ENCODE measurements at regions of chr1 and their contacts with region 1.

Region 1: DNA sequence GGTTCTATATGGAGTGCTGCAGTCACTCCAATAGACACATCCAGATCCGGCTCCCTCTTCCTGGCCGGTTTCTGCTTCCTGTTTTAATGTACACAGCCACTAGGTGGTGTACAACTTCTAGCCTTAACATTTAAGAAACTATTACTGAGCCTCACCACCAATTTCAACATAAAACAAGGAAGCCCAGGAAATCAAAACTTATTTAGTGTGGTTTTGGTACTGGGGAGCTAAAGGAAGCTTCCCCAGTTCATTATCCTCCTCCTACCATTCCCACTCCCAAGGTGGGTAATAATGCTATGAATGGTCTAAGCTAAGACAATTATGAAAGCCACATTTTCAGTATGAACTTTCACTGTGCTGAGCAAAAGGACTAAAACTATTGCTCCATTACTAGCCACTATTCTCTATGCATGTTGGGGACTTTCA is 25.5 kb upstream of the MTMR11 start:
- DNase-seq: peak in 1 of 2 donors; percentile 70
- ATAC-seq: peak; percentile 85 to 91 (median 90)
- H3K4me3 ChIP-seq: no peak overlapping the region
- H3K27ac ChIP-seq: peak overlapping the region in 7 of 10 donors; percentile 4 to 70 (median 37)
- H3K4me1 ChIP-seq: peaks cover 0 to 26% (median 11%) of the 10 kb centered on the region in 9 donors
- H3K27me3 ChIP-seq: peaks cover 0 to 4% (median 0%) of the 10 kb centered on the region in 7 donors
- CTCF ChIP-seq: peak; percentile 63 to 87 (median 80)

Region 2: GRCh38 chr1:149997585-149998262 is 35.6 kb after region 1 on chr1:
- intact Hi-C with region 1: loop called in 1 of 10 experiments (anchors 2 kb)
- DNase-seq: no peak
- ATAC-seq: peak in 3 of 8 donors; percentile 28 to 37 (median 28)
- H3K4me3 ChIP-seq: no peak overlapping the region
- H3K27ac ChIP-seq: no peak overlapping the region
- H3K4me1 ChIP-seq: peaks cover 6 to 91% (median 63%) of the 10 kb centered on the region in 9 donors
- H3K27me3 ChIP-seq: peaks cover 0 to 91% (median 0%) of the 10 kb centered on the region in 7 donors
- CTCF ChIP-seq: no peak

Region 3: GRCh38 chr1:150010393-150011115 is 48.4 kb after region 1 on chr1 and contains the start of gene OTUD7B:
- intact Hi-C with region 1: loop called in 1 of 10 experiments (anchors 2 kb)
- DNase-seq: peak; percentile 86 to 89
- ATAC-seq: peak; percentile 95 to 97 (median 96)
- H3K4me3 ChIP-seq: peak within 1 kb of the TSS; percentile 81 to 97 (median 90)
- H3K27ac ChIP-seq: peak within 1 kb of the TSS; percentile 85 to 97 (median 95)
- H3K4me1 ChIP-seq: peaks cover 7 to 46% (median 35%) of the 10 kb centered on the region in 9 donors
- H3K27me3 ChIP-seq: peaks cover 0 to 96% (median 0%) of the 10 kb centered on the region in 7 donors
- CTCF ChIP-seq: peak in 3 of 9 donors; percentile 9 to 28 (median 21)
- total RNA-seq, gene OTUD7B: 22.7 to 34.4 (median 28.9) TPM

Region 4: DNA sequence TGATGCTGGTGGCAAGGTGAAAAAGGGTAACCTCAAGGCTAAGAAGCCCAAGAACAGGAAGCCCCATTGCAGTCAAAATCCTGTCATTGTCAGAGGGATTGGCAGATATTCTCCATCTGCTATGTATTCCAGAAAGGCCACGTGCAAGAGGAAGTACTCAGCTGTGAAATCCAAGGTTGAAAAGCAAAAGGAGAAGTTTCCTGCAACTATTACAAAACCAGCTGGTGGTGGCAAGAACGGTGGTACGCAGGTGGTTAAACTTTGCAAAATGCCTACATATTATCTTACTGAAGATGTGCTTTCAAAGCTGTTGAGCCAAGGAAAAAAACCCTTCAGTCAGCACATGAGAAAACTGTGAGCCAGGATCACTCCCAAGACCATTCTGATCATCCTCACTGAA is 91.8 kb after region 1 on chr1:
- intact Hi-C with region 1: loop called (anchors 1 to 5 kb)
- DNase-seq: no peak
- ATAC-seq: no peak
- H3K4me3 ChIP-seq: no peak overlapping the region
- H3K27ac ChIP-seq: no peak overlapping the region
- H3K4me1 ChIP-seq: peaks cover 0 to 34% (median 6%) of the 10 kb centered on the region in 9 donors
- H3K27me3 ChIP-seq: peaks cover 0 to 4% (median 0%) of the 10 kb centered on the region in 7 donors
- CTCF ChIP-seq: no peak

Region 5: GRCh38 chr1:150162862-150163706 is 200.9 kb after region 1 on chr1:
- intact Hi-C with region 1: loop called in 8 of 10 experiments (anchors 2 to 10 kb)
- DNase-seq: peak; percentile 71 to 90
- ATAC-seq: peak; percentile 88 to 93 (median 91)
- H3K4me3 ChIP-seq: peak overlapping the region in 8 of 10 donors; percentile 13 to 46 (median 30)
- H3K27ac ChIP-seq: peak overlapping the region; percentile 76 to 96 (median 90)
- H3K4me1 ChIP-seq: peaks cover 10 to 78% (median 37%) of the 10 kb centered on the region in 9 donors
- H3K27me3 ChIP-seq: no peaks in the 10 kb centered on the region
- CTCF ChIP-seq: peak in 1 of 9 donors; percentile 5

Region 6: DNA sequence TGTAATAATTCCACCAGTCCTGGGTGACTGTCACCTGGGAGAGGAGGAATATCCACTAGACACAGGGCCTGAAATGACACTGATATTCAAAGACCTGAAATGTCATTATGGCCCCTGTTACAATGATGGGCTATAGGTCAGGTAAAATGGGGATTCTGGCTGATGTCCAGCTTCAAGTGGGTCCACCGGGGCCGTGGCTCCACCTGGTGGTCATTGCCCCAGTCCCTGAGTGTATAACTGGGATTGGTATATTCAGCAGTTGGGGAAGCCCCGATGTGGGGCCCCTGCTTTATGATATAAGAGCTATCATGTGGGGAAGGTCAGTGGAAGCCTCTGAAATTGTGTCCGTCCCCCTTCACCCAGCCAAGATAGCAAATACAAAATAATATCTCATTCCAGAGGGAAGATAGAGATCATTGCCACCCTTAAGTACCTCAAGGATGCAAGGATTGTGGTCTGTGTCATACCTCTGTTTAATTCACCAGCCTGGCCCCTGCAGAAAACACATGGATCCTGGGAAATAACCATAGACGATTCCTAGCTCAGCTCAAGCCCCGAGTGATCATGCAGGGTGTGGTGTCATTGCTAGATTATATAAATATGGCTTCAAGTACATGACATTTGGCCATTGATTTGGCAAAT is 206.9 kb after region 1 on chr1:
- intact Hi-C with region 1: loop called in 9 of 10 experiments (anchors 1 to 10 kb)
- DNase-seq: peak; percentile 67 to 73
- ATAC-seq: peak; percentile 36 to 76 (median 70)
- H3K4me3 ChIP-seq: no peak overlapping the region
- H3K27ac ChIP-seq: no peak overlapping the region
- H3K4me1 ChIP-seq: peaks cover 0 to 27% (median 11%) of the 10 kb centered on the region in 9 donors
- H3K27me3 ChIP-seq: no peaks in the 10 kb centered on the region
- CTCF ChIP-seq: peak; percentile 72 to 91 (median 84)

Region 7: DNA sequence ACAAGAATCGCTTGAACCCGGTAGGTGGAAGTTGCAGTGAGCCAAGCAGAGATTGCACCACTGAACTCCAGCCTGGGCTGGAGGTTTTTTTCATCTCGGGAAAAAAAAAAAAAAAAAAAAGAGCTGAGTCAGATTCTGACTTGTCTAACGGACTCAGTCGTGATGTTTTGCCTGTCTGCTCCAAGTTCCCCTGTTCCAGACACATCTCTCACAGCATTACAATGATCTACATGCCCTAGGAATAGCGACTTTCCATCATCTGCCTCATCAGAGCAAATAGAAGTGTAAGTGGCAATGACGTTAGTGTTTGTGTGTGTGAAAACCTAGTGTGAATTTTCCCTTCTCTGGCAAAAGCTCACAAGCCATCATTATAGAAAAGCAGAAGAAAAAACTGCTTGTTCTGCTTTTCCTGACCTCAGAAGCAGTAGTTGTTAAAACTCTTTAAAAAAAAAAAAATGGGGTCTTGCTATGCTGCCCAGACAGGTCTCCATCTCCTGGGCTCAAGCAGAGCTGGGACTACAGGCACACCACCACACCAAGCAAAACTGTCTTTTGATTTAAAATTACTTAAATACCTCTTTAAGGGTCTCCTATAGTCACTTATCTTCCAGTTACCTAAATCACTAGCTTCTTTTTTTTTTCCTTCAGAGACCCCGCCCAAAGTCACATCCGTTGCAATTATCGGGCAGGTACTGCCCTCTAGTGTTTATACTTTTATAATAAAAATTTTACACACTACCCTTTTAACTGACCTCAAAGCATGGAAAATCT is 224.8 kb after region 1 on chr1:
- intact Hi-C with region 1: loop called in 4 of 10 experiments (anchors 5 kb)
- DNase-seq: peak in 1 of 2 donors; percentile 14
- ATAC-seq: peak; percentile 50 to 81 (median 68)
- H3K4me3 ChIP-seq: peak overlapping the region in 1 of 10 donors; percentile 6
- H3K27ac ChIP-seq: peak overlapping the region in 7 of 10 donors; percentile 3 to 79 (median 52)
- H3K4me1 ChIP-seq: peaks cover 0 to 28% (median 7%) of the 10 kb centered on the region in 9 donors
- H3K27me3 ChIP-seq: no peaks in the 10 kb centered on the region
- CTCF ChIP-seq: peak; percentile 26 to 74 (median 63)